PC-3 (cell line): ENCODE measurements at regions of chr17 and their contacts with region 1.

Region 1: GRCh38 chr17:63434876-63435684 is 11.0 kb downstream of the CYB561 start:
- DNase-seq: peak; percentile 99
- ATAC-seq: peak; percentile 39
- H3K4me3 ChIP-seq: no peak overlapping the region
- H3K27ac ChIP-seq: peak overlapping the region; percentile 97
- H3K4me1 ChIP-seq: peaks cover 67% of the 10 kb centered on the region
- H3K27me3 ChIP-seq: no peaks in the 10 kb centered on the region
- CTCF ChIP-seq: peak; percentile 45; the same call in 1 of the 2 replicates

Region 2: DNA sequence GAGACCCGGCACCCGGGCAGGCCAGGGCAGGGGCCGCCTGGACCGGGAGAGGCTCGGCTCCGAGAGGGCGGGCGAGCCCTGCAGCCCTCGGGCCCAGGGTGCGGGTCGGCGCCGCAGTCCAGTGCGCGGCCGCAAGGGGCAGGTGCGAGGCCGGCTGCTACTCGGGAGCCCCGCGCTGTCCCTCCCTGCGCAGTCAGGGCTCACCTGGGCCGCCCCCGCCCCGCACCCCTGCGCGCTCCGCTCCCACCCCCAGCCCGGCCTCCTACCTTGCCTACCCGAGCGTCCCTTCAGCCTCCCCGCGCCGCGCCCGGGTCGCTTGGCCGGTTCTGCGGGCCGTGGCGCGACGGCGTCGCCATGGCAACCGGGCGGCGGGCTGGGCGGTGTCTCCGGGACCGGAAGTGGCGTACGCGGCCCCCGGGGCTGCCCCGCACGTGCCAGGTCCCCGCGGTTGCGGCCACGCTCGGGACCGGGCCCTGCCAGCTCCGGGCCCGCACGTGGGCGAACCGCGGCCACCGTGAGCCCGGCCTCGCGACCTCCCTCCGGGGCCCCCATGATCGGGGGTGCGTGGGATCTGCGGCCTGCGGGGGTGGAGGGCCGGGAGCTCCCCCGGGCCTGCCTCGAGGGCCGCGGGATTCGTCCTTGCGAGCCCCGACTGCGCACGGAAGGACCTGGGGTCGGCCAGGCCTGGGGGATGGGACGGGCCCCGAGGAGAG is 11.1 kb after region 1 on chr17 and contains the start of gene CYB561:
- CTCF ChIA-PET with region 1: interaction called, 10 read pairs
- POLR2A ChIA-PET with region 1: interaction called, 20 read pairs
- intact Hi-C with region 1: no loop called
- DNase-seq: peak; percentile 90
- ATAC-seq: peak; percentile 77
- H3K4me3 ChIP-seq: peak within 1 kb of the TSS; percentile 93
- H3K27ac ChIP-seq: peak within 1 kb of the TSS; percentile 91
- H3K4me1 ChIP-seq: peaks cover 41% of the 10 kb centered on the region
- H3K27me3 ChIP-seq: no peaks in the 10 kb centered on the region
- CTCF ChIP-seq: peak; percentile 55
- total RNA-seq, gene CYB561: 125 and 145 TPM in 2 replicates

Region 3: DNA sequence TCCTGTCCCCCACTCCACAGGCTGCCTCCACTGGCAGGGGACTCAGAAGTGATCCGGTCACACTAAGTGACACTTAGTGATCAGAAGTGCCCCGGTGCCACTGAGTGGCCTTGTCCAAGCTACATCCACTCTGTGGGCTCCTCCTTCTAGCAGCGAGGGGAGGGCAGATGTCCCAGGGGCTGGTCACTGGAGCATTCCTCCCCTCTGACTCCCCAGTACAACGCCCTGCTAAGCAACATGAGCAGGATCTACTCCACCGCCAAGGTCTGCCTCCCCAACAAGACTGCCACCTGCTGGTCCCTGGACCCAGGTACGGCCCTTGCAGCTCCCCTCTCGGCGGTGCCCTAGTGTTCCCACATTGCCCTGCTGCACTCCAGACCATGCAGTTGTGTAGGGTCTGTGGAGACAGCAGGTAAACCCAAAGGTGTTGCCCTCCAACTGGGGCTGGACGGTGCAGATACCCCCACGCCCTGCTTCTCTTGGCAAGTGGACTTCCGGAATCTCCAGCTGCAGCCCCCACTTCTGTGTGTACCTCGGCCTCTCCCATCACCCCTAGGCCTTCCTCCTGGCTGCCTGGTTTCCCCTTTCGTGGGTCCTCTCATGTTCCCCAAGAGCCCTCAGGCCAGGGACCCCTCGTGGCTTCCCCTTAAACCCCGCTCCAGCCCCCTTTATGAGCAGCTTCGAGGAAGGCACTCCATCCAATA is 43.9 kb after region 1 on chr17:
- CTCF ChIA-PET with region 1: interaction called, 13 read pairs
- POLR2A ChIA-PET with region 1: interaction called, 3 read pairs
- intact Hi-C with region 1: no loop called
- DNase-seq: peak; percentile 97
- ATAC-seq: peak; percentile 82
- H3K4me3 ChIP-seq: no peak overlapping the region
- H3K27ac ChIP-seq: no peak overlapping the region
- H3K4me1 ChIP-seq: peaks cover 20% of the 10 kb centered on the region
- H3K27me3 ChIP-seq: no peaks in the 10 kb centered on the region
- CTCF ChIP-seq: peak; percentile 97

Region 4: DNA sequence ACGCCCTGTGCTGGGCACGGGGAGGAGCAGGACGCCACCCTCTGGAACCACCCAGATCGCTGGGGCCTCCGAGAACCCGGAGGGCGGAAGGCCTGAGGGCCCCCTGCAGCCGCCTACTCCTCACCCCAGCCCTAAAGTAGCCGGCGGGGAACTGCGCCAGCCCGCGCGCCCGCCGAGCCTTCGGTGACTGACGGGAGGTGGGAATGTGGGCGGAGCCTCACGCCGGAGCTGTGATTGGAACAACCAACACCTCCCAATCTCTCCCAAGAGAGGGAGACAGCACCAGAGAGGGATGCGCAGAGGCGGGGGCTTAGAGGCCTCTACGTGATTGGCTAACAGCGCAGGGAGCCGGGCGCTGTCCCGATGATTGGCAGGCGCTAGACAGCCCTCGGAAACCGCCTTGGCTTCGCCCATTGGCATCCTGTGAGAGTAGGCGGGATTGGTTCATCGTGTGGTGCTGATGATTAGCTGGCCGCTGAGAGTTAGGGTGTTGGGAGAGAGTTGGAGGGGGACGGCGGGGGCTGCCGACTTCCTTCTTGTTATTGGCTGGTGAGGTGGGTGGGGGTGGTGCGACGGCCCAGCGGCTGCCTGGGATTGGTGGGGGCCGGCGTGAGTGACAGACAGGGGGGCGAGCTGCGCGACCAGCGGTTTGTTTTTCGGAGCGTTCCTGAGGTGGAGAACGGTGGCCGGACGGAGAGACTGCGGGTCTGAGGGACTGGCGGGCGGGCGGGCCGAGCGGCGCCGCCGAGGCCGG is 186.9 kb after region 1 on chr17 and contains the start of gene MAP3K3:
- CTCF ChIA-PET with region 1: no interaction called
- POLR2A ChIA-PET with region 1: interaction called, 10 read pairs
- intact Hi-C with region 1: no loop called
- DNase-seq: peak; percentile 100
- ATAC-seq: peak; percentile 86
- H3K4me3 ChIP-seq: peak within 1 kb of the TSS; percentile 82
- H3K27ac ChIP-seq: peak within 1 kb of the TSS; percentile 11; the same call in 1 of the 2 replicates
- H3K4me1 ChIP-seq: peaks cover 26% of the 10 kb centered on the region
- H3K27me3 ChIP-seq: no peaks in the 10 kb centered on the region
- CTCF ChIP-seq: no peak; the same call in 1 of the 2 replicates
- total RNA-seq, gene MAP3K3: 27.1 and 36.1 TPM in 2 replicates

Region 5: GRCh38 chr17:64496786-64497564 is 1061.9 kb after region 1 on chr17 and contains the start of gene POLG2:
- CTCF ChIA-PET with region 1: no interaction called
- POLR2A ChIA-PET with region 1: interaction called, 12 read pairs
- intact Hi-C with region 1: no loop called
- DNase-seq: peak; percentile 98
- ATAC-seq: peak; percentile 75
- H3K4me3 ChIP-seq: peak within 1 kb of the TSS; percentile 86
- H3K27ac ChIP-seq: peak within 1 kb of the TSS; percentile 68
- H3K4me1 ChIP-seq: peaks cover 67% of the 10 kb centered on the region
- H3K27me3 ChIP-seq: no peaks in the 10 kb centered on the region
- CTCF ChIP-seq: peak; percentile 85
- total RNA-seq, gene POLG2: 20.3 and 37.7 TPM in 2 replicates